PC-9 (cell line): ENCODE measurements at regions of chr4 and their contacts with region 1.

Region 1: DNA sequence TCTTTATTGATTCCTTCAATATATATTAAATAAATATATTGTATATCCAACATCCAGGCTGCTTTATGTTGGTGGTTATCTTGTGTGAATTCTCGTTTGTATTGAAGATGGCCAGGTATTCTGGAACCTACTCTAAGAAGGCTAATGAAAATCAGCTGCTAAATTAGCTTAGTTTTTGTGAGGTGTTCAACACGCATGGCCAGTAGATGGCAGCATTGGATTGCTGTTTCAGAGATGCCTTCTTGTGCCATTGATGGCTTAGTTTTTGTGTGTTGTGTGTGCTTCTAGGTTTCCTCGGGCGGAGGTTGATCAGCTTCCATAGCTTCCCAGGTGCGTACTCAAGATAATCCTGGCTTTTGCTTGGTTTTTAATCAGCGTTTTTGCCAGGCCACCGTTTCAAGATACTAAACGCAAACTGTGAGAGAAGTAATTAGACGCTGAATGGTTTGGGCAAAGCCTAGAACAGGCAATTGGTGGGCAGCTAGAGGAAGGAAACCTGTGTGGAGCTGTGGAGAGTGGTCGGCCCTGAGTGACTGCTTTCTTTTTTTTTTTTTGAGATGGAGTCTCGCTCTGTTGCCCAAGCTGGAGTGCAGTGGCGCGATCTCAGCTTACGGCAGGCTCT is 15.1 kb downstream of the NOCT start:
- DNase-seq: peak; percentile 55 to 57
- H3K4me3 ChIP-seq: no peak overlapping the region
- H3K27ac ChIP-seq: no peak overlapping the region
- H3K4me1 ChIP-seq: no peaks in the 10 kb centered on the region
- H3K27me3 ChIP-seq: no peaks in the 10 kb centered on the region
- CTCF ChIP-seq: peak; percentile 81

Region 2: DNA sequence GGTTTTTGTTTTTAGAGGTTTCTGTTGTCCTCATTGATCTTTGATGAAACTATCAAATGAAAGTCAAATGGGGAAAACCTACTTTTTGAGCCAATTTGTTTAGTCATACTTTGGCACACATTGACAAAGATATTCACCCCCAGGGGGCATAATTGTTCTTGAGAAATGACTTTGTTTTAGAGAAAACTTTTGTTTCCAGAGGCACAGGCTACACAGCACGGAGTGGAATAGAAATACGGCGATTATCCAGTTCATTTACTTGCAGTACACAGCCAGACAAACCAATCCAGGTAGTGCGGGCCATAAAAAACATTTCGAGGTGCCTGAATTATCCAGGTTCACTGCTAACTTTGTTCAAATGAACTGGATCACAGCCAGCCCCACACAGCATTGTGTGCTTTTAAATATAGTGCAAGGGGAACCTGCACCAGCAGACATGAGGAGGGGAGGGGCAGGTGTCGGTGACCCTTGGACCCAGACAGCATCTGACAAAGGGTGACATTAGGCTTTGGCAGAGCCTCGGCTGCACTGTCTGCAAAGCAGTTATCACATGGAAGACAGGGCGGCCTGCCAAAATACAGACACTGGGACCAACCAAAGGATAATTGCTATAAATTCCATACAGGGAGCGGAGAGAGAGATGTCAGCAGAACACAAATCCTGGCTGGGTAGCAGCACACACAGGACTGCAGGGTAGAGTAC is 194.7 kb before region 1 on chr4:
- CTCF ChIA-PET with region 1: no interaction called
- POLR2A ChIA-PET with region 1: no interaction called
- intact Hi-C with region 1: no loop called
- DNase-seq: no peak
- H3K4me3 ChIP-seq: no peak overlapping the region
- H3K27ac ChIP-seq: no peak overlapping the region
- H3K4me1 ChIP-seq: no peaks in the 10 kb centered on the region
- H3K27me3 ChIP-seq: no peaks in the 10 kb centered on the region
- CTCF ChIP-seq: no peak

Region 3: DNA sequence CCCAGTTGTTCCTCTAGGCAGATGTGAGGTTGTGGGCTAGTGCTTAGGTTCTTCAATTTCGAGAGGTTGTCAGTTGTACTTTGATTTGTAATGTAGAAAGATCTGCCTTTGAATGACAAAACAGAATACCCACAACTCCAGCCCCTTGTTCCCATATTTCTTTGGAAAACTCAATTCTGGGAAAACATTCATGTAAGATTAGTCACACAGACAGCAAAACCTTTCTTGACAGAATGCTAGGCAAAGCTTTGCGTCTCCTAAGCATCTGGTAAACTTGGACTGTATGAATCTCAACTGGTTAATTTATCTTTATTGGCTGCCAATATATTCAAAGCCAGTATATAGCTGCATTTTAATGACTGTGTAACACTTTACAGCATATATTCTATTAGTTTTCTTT is 19.7 kb after region 1 on chr4:
- CTCF ChIA-PET with region 1: interaction called, 10 read pairs
- POLR2A ChIA-PET with region 1: no interaction called
- intact Hi-C with region 1: no loop called
- DNase-seq: no peak
- H3K4me3 ChIP-seq: no peak overlapping the region
- H3K27ac ChIP-seq: no peak overlapping the region
- H3K4me1 ChIP-seq: peaks cover 12% of the 10 kb centered on the region
- H3K27me3 ChIP-seq: no peaks in the 10 kb centered on the region
- CTCF ChIP-seq: no peak

Region 4: GRCh38 chr4:139177868-139178611 is 147.3 kb after region 1 on chr4:
- CTCF ChIA-PET with region 1: interaction called, 6 read pairs
- POLR2A ChIA-PET with region 1: no interaction called
- intact Hi-C with region 1: loop called (anchors 10 kb)
- DNase-seq: peak; percentile 69 to 97
- H3K4me3 ChIP-seq: peak overlapping the region; percentile 83
- H3K27ac ChIP-seq: peak overlapping the region; percentile 21
- H3K4me1 ChIP-seq: peaks cover 11% of the 10 kb centered on the region
- H3K27me3 ChIP-seq: no peaks in the 10 kb centered on the region
- CTCF ChIP-seq: no peak

Region 5: GRCh38 chr4:139453371-139454110 is 422.8 kb after region 1 on chr4:
- CTCF ChIA-PET with region 1: no interaction called
- POLR2A ChIA-PET with region 1: interaction called, 16 read pairs
- intact Hi-C with region 1: no loop called
- DNase-seq: peak; percentile 86 to 96
- H3K4me3 ChIP-seq: peak overlapping the region; percentile 90
- H3K27ac ChIP-seq: peak overlapping the region; percentile 79
- H3K4me1 ChIP-seq: peaks cover 38% of the 10 kb centered on the region
- H3K27me3 ChIP-seq: no peaks in the 10 kb centered on the region
- CTCF ChIP-seq: peak; percentile 16; the same call in 1 of the 2 replicates

Region 6: DNA sequence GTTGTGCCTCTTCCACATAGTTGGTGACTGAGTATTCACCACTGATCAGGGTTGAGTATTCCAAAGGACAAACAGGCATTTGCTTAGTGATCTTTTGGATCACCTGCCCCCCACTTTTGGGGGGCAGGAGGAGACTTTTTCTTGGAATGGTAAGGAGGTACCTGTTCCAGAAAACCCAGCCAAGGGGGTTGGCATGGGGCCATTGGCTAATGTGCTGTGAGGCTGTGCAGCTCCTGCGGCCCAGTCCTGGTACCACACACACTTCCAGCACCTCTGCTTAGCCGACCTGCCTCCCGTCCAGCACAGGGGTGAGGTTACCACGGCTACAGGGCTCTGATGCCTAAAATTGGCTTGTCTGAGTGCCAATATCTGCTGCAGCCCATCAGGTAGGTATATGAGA is 594.8 kb after region 1 on chr4:
- CTCF ChIA-PET with region 1: no interaction called
- POLR2A ChIA-PET with region 1: interaction called, 26 read pairs
- intact Hi-C with region 1: no loop called
- DNase-seq: no peak
- H3K4me3 ChIP-seq: no peak overlapping the region
- H3K27ac ChIP-seq: no peak overlapping the region
- H3K4me1 ChIP-seq: no peaks in the 10 kb centered on the region
- H3K27me3 ChIP-seq: no peaks in the 10 kb centered on the region
- CTCF ChIP-seq: no peak

Region 7: DNA sequence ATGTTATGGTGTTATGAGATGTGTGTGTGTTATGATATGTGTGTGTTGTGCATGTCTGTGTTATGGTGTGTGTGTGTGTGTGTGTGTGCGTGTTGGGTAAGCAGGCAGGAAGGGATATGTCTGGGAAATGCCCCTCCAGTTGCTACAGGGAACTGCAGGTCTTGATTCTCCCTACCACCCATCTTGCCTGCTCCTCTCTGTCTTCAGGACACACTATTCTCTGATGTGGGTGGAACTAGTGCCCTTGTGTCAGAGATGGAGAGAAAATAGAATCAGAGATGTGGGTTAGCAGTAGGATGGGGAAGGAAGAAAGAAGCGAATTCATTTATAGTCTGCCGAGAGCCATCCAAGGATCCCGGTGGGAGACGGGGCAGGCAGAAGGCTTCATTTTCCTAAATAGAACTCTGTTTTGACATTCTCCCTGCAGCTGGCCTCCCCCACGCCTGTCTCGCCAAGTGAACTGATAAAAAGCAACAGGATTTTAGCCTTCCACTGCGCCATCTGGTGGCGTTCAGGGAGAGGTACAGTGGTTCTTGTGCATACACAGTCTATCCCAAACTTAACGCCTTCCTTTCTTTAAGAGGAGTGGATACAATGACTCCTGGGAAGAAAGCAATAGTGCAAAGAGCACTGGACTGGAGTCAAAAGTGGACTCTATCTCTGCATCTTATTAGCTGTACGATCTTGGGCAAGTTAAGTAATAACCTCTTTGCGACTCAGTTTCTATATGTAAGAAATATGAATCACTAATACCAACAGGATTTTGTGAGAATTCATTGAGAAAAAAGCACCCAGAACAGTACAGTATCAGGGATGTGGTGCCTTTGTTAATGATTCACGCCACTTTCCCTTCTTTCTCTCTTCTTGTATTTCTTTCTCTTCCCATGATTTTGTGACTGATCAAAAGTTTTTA is 620.8 kb after region 1 on chr4:
- CTCF ChIA-PET with region 1: interaction called, 3 read pairs
- POLR2A ChIA-PET with region 1: interaction called, 3 read pairs
- intact Hi-C with region 1: loop called (anchors 2 kb)
- DNase-seq: peak; percentile 49 to 60
- H3K4me3 ChIP-seq: no peak overlapping the region
- H3K27ac ChIP-seq: no peak overlapping the region
- H3K4me1 ChIP-seq: peaks cover 16% of the 10 kb centered on the region
- H3K27me3 ChIP-seq: no peaks in the 10 kb centered on the region
- CTCF ChIP-seq: peak; percentile 93